PC-9 (cell line): ENCODE measurements at regions of chr9 and their contacts with region 1.

Region 1: DNA sequence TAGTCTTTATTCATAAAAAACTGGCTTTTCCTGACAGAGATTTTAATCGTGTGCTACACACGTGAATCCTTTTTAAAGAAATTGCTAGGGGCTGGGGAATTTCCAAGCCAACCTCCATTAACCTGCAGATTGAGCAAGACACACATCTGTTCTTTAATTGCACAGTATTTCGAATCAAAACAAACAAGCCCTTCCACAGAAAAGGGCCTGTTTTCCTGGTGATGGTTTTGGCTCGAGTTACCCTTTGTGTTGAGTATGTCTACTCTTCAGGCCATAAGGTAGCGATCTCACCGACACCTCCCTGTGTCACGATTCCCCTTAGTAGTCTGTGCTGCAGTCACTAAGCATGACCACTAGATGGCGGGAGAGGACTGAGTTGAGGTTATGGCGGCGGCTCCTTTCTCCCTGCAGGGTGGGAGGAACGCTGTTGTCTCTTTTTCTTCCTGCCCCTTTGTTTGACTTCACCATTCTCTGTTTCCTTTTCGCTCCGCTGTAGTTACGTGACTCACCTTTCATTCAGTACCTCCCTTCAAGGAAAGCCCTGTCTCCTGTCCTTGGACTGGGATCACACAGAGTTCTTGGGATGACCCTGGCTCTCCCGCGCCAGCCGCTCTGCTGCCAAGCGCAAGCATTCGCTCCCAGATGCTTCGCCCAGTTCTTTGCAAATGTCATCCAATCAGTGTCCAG is 137.1 kb upstream of the SLC24A2 start:
- DNase-seq: peak; percentile 40 to 58
- H3K4me3 ChIP-seq: no peak overlapping the region
- H3K27ac ChIP-seq: no peak overlapping the region
- H3K4me1 ChIP-seq: no peaks in the 10 kb centered on the region
- H3K27me3 ChIP-seq: no peaks in the 10 kb centered on the region
- CTCF ChIP-seq: peak; percentile 90

Region 2: GRCh38 chr9:19493174-19493811 is 432.7 kb before region 1 on chr9:
- CTCF ChIA-PET with region 1: no interaction called
- POLR2A ChIA-PET with region 1: no interaction called
- intact Hi-C with region 1: loop called (anchors 10 kb)
- DNase-seq: peak in 1 of 2 experiments; percentile 22
- H3K4me3 ChIP-seq: no peak overlapping the region
- H3K27ac ChIP-seq: no peak overlapping the region
- H3K4me1 ChIP-seq: no peaks in the 10 kb centered on the region
- H3K27me3 ChIP-seq: peaks cover 26% of the 10 kb centered on the region; the same call in 1 of the 2 replicates
- CTCF ChIP-seq: peak; percentile 69

Region 3: GRCh38 chr9:19946441-19947109 is 20.6 kb after region 1 on chr9:
- CTCF ChIA-PET with region 1: no interaction called
- POLR2A ChIA-PET with region 1: no interaction called
- intact Hi-C with region 1: no loop called
- DNase-seq: no peak
- H3K4me3 ChIP-seq: no peak overlapping the region
- H3K27ac ChIP-seq: no peak overlapping the region
- H3K4me1 ChIP-seq: no peaks in the 10 kb centered on the region
- H3K27me3 ChIP-seq: no peaks in the 10 kb centered on the region
- CTCF ChIP-seq: 0 out of 2 replicates have a peak, but pooled peaks have one; percentile 17

Region 4: DNA sequence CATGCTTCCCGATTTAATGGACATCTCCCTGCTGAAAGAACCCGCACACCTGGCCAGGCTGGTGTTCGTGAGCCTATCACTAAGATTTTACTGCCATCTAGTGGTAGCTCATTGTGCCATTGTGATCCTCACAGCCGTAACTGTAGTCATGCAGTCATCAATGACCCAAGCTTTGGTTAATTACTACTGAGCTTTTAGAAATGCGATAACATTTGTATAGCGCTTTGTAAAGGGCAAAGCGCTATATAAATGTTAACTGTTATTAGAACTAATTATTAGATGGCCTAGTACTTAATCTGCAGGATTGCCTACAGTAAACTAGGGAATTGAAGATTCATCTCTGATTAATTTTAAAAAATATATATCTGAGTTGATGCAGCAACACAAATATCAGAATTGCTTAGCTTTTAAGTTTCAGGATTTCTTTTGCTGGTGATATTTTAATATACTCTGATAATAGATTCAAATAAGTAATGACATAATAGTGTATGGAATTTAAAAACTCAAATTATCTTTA is 1015.3 kb after region 1 on chr9:
- CTCF ChIA-PET with region 1: no interaction called
- POLR2A ChIA-PET with region 1: no interaction called
- intact Hi-C with region 1: loop called (anchors 1 kb)
- DNase-seq: peak; percentile 34
- H3K4me3 ChIP-seq: no peak overlapping the region
- H3K27ac ChIP-seq: no peak overlapping the region
- H3K4me1 ChIP-seq: no peaks in the 10 kb centered on the region
- H3K27me3 ChIP-seq: no peaks in the 10 kb centered on the region
- CTCF ChIP-seq: peak; percentile 82

Region 5: DNA sequence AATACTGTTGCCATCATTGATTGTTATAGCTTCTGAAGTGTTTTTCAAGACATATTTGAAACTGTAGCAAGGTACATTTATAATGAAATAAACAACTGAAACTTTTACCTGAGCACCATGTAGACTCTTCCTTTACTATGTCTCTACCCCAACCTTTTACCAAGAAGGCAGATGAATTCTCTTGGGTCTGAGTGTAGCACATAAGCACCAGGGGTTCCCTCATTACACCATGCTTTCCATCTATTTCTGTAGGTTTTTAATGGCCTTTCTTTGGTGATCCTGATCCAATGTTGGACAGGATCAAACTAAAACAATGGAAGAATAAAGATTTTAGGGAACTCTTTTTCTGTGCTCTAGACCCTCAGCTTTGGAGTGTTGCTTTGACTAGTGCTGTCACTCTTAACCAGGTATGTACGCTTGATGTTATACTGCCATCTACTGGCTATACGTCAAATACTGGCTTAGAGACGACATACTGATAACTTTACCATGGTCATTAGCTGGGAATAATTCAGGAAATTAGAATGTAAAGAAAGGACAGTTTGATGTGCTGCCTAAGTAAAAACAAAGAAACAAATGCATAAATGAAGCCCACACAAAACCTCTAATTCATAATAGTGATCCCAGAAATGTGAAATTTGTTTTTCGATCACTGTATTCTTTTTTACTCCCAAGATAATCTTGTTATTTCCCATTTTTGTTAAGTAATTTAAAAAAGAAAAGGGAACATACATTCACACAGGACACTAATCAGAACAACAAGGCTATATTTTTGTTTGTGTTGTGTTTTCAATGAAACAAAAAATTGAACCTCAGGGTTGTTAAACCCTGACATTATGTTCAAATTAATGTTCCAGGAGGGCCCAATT is 1185.0 kb after region 1 on chr9:
- CTCF ChIA-PET with region 1: no interaction called
- POLR2A ChIA-PET with region 1: no interaction called
- intact Hi-C with region 1: loop called (anchors 2 kb)
- DNase-seq: peak; percentile 4 to 45
- H3K4me3 ChIP-seq: no peak overlapping the region
- H3K27ac ChIP-seq: no peak overlapping the region
- H3K4me1 ChIP-seq: no peaks in the 10 kb centered on the region
- H3K27me3 ChIP-seq: no peaks in the 10 kb centered on the region
- CTCF ChIP-seq: peak; percentile 82

Region 6: GRCh38 chr9:21155501-21155900 is 1229.5 kb after region 1 on chr9:
- CTCF ChIA-PET with region 1: no interaction called
- POLR2A ChIA-PET with region 1: no interaction called
- intact Hi-C with region 1: loop called (anchors 5 kb)
- DNase-seq: no peak
- H3K4me3 ChIP-seq: no peak overlapping the region
- H3K27ac ChIP-seq: no peak overlapping the region
- H3K4me1 ChIP-seq: no peaks in the 10 kb centered on the region
- H3K27me3 ChIP-seq: no peaks in the 10 kb centered on the region
- CTCF ChIP-seq: no peak

Region 7: GRCh38 chr9:21802195-21803000 is 1876.4 kb after region 1 on chr9 and contains the start of gene MTAP:
- CTCF ChIA-PET with region 1: no interaction called
- POLR2A ChIA-PET with region 1: no interaction called
- intact Hi-C with region 1: loop called (anchors 5 kb)
- DNase-seq: peak; percentile 81 to 84
- H3K4me3 ChIP-seq: peak within 1 kb of the TSS; percentile 87
- H3K27ac ChIP-seq: peak within 1 kb of the TSS; percentile 78
- H3K4me1 ChIP-seq: peaks cover 27% of the 10 kb centered on the region
- H3K27me3 ChIP-seq: no peaks in the 10 kb centered on the region
- CTCF ChIP-seq: no peak
- total RNA-seq, gene MTAP: 44.1 and 46.1 TPM in 2 replicates